ENCODE measurements at regions of chr3 and their contacts with region 1.

Region 1: GRCh38 chr3:130014526-130014925 is 40.0 kb downstream of the TRH start:
- DNase-seq: no peak

Region 2: DNA sequence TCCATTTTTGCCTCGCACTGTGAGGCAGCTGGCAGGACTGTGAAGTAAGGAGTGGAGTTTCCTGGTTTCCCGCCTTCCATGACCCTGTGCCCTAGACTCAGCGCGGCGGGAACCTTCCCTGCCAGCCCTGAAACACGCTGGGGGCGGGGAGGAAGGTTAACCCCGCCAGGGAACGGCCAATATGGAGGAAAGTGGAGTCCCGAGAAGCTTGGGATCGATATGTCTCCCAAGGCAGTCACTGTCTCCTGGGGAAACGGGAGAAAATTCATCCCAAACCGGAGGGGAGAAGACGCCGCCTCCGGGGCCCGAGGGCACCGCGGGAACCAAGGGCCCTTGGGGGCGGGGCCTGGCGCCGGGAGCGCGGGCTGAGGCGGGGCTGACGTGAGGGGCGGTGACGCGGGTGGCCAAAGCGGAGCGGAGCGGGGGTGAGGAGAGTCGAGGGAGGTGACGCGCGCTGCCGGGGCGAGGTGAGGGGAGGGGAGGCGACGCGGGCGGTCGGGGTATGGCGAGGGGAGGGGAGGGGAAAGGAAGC is 736.0 kb before region 1 on chr3 and contains the start of gene HMCES:
- intact Hi-C with region 1: no loop called
- DNase-seq: peak; percentile 98
- total RNA-seq, gene HMCES: 24.5 to 25.2 TPM

Region 3: DNA sequence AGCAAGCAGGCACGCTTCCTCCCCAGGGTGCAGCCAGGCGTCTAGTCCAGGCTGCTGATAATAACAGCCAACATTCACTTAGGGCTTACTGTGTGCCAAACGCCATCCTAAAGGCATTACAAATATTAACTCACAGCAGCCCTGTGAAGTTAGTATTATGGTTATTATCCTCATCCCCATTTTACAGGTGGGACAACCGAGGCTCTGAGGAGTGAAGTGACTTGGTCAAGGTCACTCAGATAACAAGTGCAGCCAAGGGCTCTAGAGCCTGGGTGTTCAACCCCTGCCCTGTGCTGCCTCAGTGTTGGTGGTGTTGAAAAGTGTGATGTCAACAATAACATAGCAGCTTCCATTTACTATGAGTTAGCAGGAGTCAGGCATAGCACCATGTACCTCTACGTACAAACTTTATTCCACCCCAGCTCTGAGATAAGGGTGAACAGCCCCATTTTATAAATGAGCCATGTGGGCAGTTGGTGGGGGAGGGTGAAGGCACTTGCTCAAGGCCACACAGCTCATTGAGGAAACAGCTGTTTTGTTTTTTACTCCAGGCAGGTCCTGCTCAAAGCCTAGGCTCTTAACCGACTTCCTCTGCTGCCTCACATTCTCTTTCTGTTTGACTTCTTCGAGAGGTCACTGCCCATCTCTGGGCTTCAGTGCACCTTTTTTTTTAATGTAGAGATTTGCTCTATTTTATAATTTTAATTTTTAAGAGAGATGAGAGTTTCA is 64.0 kb before region 1 on chr3:
- intact Hi-C with region 1: loop called in 1 of 2 experiments (anchors 5 kb)
- DNase-seq: no peak

Measured in posterior vena cava (tissue), 2 donors.